Dendritic cell treated with granulocyte-macrophage colony-stimulating factor and Interleukin-4, amounts not matched to agents 40 ng/mL and 50 ng/mL, for 4 days (primary cell): ENCODE measurements at regions of chr5 and their contacts with region 1.

Region 1: DNA sequence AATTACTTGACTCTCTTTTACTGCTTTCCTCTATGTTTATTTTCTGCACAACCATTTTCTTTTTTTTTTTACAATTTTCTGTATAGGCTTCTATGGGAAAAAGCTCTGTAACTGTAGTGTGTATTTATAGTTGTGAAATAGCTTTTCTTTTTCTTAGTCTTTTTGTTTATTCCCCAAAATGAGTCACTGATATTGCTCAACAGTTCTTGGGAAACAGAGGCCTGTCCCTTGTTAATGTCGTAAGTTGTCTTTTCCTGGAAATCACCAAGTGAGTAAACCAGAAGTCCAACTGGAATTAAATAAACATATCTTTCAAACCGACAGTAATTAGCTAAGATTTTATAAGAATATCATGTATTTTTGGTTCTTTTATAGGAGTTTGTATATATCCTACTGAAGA is 325.1 kb upstream of the PRR16 start:
- H3K4me3 Mint-ChIP-seq: no peak overlapping the region
- H3K27ac Mint-ChIP-seq: peak overlapping the region; percentile 93
- H3K4me1 Mint-ChIP-seq: peaks cover 42% of the 10 kb centered on the region
- H3K27me3 Mint-ChIP-seq: no peaks in the 10 kb centered on the region

Region 2: GRCh38 chr5:120096413-120096812 is 42.6 kb before region 1 on chr5:
- intact Hi-C with region 1: loop called (anchors 5 kb)
- H3K4me3 Mint-ChIP-seq: peak overlapping the region; percentile 30
- H3K27ac Mint-ChIP-seq: peak overlapping the region; percentile 42
- H3K4me1 Mint-ChIP-seq: peaks cover 51% of the 10 kb centered on the region
- H3K27me3 Mint-ChIP-seq: no peaks in the 10 kb centered on the region

Region 3: GRCh38 chr5:120258123-120258522 is 119.1 kb after region 1 on chr5:
- intact Hi-C with region 1: loop called (anchors 5 kb)
- H3K4me3 Mint-ChIP-seq: no peak overlapping the region
- H3K27ac Mint-ChIP-seq: peak overlapping the region; percentile 89
- H3K4me1 Mint-ChIP-seq: peaks cover 17% of the 10 kb centered on the region
- H3K27me3 Mint-ChIP-seq: no peaks in the 10 kb centered on the region

Region 4: DNA sequence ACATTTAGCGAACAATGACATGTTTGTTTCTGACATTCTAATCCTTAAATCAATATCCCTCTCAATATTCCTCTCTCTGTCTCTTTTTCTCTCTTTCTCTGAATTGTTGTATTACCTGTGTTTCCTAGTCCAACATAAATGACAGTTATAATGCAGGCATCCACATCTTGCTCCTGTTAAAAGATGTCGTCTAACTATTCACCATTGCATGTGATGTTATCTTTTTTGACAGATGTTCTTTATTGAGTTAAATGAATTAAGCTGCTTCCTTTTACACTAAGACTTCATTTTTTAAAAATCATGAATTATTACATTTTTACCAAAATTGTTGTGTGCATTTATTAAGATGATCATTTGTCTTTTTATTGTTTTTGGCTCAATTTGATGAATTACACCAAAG is 852.5 kb after region 1 on chr5:
- intact Hi-C with region 1: no loop called
- H3K4me3 Mint-ChIP-seq: no peak overlapping the region
- H3K27ac Mint-ChIP-seq: no peak overlapping the region
- H3K4me1 Mint-ChIP-seq: no peaks in the 10 kb centered on the region
- H3K27me3 Mint-ChIP-seq: no peaks in the 10 kb centered on the region

Region 5: GRCh38 chr5:121445511-121445910 is 1306.5 kb after region 1 on chr5:
- intact Hi-C with region 1: no loop called
- H3K4me3 Mint-ChIP-seq: no peak overlapping the region
- H3K27ac Mint-ChIP-seq: no peak overlapping the region
- H3K4me1 Mint-ChIP-seq: no peaks in the 10 kb centered on the region
- H3K27me3 Mint-ChIP-seq: no peaks in the 10 kb centered on the region